Ascending aorta (tissue), 2 donors: ENCODE measurements at regions of chr6 and their contacts with region 1.

Region 1: GRCh38 chr6:168895102-168895812 is 358.4 kb downstream of the THBS2 start:
- DNase-seq: peak in 1 of 2 donors; percentile 85
- H3K4me3 ChIP-seq: peak overlapping the region in 1 of 2 donors; percentile 35
- H3K27ac ChIP-seq: no peak overlapping the region
- H3K4me1 ChIP-seq: no peaks in the 10 kb centered on the region
- H3K27me3 ChIP-seq: no peaks in the 10 kb centered on the region
- CTCF ChIP-seq: peak; percentile 82 to 95 (median 91)

Region 2: GRCh38 chr6:168908887-168909286 is 13.6 kb after region 1 on chr6:
- intact Hi-C with region 1: no loop called
- DNase-seq: peak in 1 of 2 donors; percentile 45
- H3K4me3 ChIP-seq: no peak overlapping the region
- H3K27ac ChIP-seq: no peak overlapping the region
- H3K4me1 ChIP-seq: no peaks in the 10 kb centered on the region
- H3K27me3 ChIP-seq: no peaks in the 10 kb centered on the region
- CTCF ChIP-seq: peak in 1 of 3 experiments; percentile 15

Region 3: GRCh38 chr6:169520104-169520503 is 624.8 kb after region 1 on chr6:
- intact Hi-C with region 1: loop called (anchors 1 kb)
- DNase-seq: no peak
- H3K4me3 ChIP-seq: no peak overlapping the region
- H3K27ac ChIP-seq: no peak overlapping the region
- H3K4me1 ChIP-seq: no peaks in the 10 kb centered on the region
- H3K27me3 ChIP-seq: no peaks in the 10 kb centered on the region
- CTCF ChIP-seq: peak; percentile 22 to 50 (median 29)

Region 4: DNA sequence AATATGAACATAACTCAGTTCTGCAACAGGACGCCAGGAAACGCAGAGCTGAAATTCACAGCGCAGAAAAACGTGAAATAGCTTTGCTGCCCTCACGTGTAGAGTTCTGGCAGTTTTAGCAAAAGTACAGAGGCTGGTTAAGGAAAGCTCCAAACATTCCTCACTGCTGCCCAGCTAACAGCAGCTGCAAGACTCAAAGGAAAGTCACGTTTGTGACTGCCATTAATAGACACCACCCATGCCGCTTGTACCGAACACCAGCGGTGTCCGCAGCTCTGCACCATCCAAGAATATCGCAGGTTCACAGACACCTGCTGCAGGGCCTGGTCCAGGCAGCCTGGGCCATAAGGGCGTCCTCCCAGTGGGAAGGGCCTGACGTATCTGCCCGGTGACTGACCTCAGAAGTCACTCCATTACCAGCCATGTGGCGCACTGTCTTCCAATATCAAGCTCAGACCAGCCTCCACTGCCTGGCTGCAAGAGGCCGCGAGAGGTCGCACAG is 745.1 kb after region 1 on chr6:
- intact Hi-C with region 1: loop called (anchors 1 kb)
- DNase-seq: no peak
- H3K4me3 ChIP-seq: no peak overlapping the region
- H3K27ac ChIP-seq: no peak overlapping the region
- H3K4me1 ChIP-seq: no peaks in the 10 kb centered on the region
- H3K27me3 ChIP-seq: no peaks in the 10 kb centered on the region
- CTCF ChIP-seq: peak; percentile 36 to 51 (median 46)